Pancreas (tissue), 10 donors: ENCODE measurements at regions of chr2 and their contacts with region 1.

Region 1: DNA sequence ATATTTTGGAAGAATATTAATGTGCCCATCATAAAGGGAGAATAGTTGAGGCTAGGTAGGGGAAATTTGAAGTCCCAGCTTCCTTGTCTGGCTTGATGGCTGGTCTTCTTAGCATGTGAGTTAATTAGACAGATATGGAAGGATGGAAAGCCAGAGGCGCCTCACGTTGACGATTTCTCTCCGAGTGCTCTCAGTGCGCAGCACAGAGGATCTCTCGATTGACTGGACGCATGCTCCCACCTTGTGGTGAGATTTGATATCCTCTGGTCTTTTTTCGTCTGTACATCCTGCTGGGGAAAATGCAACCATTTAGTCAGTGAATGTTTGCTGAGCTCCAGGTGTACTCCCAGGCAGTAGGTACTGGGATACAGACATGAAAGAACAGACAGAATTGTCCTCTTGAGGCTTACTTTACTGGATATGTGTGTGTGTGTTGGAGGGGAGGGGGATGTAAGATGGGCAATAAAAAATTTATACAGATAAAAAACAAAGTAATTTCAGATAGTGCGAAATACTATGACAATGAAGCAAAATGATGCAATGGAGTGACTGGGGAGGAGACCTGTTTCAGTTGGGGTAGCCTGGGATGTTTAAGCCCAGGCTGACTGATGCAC is 66.9 kb upstream of the ZNG1B start:
- DNase-seq: peak in 4 of 6 donors; percentile 51 to 77 (median 62)
- ATAC-seq: peak; percentile 93 to 99 (median 98)
- H3K4me3 ChIP-seq: no peak overlapping the region
- H3K27ac ChIP-seq: peak overlapping the region in 1 of 4 donors; percentile 64
- H3K4me1 ChIP-seq: no peaks in the 10 kb centered on the region
- H3K27me3 ChIP-seq: no peaks in the 10 kb centered on the region
- CTCF ChIP-seq: peak; percentile 30 to 48 (median 40)

Region 2: GRCh38 chr2:113138428-113139322 is 231.9 kb before region 1 on chr2:
- intact Hi-C with region 1: loop called in 1 of 3 experiments (anchors 5 kb)
- DNase-seq: peak in 4 of 6 donors; percentile 53 to 73 (median 69)
- ATAC-seq: peak; percentile 90 to 95 (median 94)
- H3K4me3 ChIP-seq: no peak overlapping the region
- H3K27ac ChIP-seq: peak overlapping the region in 2 of 4 donors; percentile 49 to 50
- H3K4me1 ChIP-seq: peaks cover 0 to 15% (median 0%) of the 10 kb centered on the region in 3 donors
- H3K27me3 ChIP-seq: no peaks in the 10 kb centered on the region
- CTCF ChIP-seq: peak; percentile 73 to 86 (median 81)

Region 3: DNA sequence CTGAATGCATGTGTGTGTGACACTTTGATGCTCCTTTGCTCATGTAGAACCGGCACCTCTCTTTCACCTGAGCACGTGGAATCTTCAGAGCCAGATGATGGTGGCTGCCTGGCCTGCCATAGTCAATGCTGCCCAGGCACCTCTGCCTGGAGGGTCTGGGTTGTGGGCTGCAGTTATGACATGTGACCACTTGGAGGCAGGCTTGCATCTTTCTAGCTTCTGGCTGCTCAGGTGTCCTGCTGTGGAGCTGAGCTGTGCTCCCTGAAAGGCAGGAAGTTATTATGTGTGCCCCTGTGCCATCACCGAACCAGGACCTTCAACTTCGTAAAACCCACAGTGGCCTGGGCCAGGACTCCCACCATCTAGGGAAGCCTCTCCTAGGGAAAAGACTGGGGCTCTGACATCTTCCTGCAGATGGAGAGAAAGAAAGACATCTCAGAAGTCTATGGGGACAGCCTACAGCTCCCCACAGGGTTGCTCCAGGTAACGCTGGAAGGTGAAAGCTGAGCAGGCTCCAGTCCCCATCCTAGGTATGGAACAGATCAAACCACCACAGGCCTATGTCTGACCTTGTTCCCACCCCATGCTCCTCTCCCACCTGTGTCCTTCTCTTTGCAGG is 166.6 kb before region 1 on chr2:
- intact Hi-C with region 1: loop called in 2 of 3 experiments (anchors 5 to 10 kb)
- DNase-seq: peak in 5 of 6 donors; percentile 55 to 81 (median 76)
- ATAC-seq: peak; percentile 32 to 82 (median 68)
- H3K4me3 ChIP-seq: no peak overlapping the region
- H3K27ac ChIP-seq: peak overlapping the region in 1 of 4 donors; percentile 15
- H3K4me1 ChIP-seq: peaks cover 0 to 13% (median 5%) of the 10 kb centered on the region in 3 donors
- H3K27me3 ChIP-seq: no peaks in the 10 kb centered on the region
- CTCF ChIP-seq: peak; percentile 52 to 77 (median 68)

Region 4: DNA sequence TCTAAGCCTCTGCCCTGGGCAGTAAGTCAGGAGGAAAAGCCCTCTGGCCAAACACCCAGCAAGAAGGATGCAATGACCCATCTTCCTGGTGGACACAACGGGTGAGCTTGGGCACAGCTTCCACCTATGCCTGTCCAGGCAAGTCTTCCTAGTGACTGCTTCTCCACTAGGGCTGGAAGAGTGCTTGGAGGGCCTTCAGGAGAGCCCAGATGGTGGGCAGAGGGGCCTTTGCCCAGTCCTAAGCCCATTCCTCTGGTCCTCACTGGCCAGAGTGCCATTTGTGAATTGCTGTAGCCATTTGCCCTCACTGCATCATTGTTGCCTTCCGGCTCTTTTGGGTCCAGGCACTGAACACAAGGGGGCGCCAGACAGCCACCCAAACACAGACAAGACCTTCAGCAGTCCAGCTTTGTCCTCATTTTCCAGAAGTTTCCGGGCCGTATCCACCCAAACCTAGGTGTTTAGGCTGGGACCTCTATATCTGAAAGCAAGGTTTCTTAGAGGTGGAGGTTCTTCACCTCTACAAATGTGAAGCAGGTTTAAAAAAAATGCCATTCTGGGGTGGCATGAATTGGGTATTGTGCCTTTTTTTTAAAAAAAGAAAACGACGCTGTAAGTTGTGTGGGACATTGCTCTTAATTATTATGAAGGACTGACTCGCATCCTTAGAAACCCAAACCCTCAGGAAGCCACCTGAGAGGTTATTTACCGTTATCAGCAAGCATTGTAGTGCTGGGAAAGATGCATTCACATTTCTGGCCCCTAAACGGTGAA is 121.4 kb before region 1 on chr2:
- intact Hi-C with region 1: loop called (anchors 2 to 10 kb)
- DNase-seq: peak; percentile 61 to 85 (median 80)
- ATAC-seq: peak; percentile 84 to 97 (median 92)
- H3K4me3 ChIP-seq: no peak overlapping the region
- H3K27ac ChIP-seq: no peak overlapping the region
- H3K4me1 ChIP-seq: peaks cover 0 to 3% (median 0%) of the 10 kb centered on the region in 3 donors
- H3K27me3 ChIP-seq: no peaks in the 10 kb centered on the region
- CTCF ChIP-seq: peak; percentile 78 to 92 (median 88)